Activated naive CD4-positive, alpha-beta T cell treated with anti-CD3 and anti-CD28 coated beads for 36 hours (primary cell): ENCODE measurements at regions of chr3 and their contacts with region 1.

Region 1: DNA sequence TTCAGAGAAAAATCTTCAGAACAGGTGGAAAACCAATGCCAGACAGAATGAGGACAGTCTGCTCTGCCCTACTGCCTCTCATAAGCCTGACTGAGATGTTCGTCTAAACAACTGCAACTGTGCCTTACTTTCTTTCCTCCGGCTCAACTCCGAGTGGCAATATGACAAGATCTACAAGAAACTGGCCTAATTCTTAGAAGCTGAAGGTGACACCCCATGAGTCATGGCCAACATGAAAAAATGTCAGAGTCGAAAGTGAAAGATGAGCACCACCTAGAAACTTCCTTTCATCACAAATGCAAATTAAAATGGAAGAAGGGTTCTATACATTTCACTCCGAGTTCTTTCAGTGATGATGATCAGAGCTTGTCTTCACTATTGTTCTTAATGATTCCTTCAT is 12.9 kb downstream of the PCYT1A start:
- DNase-seq: peak; percentile 86
- H3K4me3 Mint-ChIP-seq: peak overlapping the region; percentile 52
- H3K27ac Mint-ChIP-seq: peak overlapping the region; percentile 94
- H3K4me1 Mint-ChIP-seq: peaks cover 73% of the 10 kb centered on the region
- H3K27me3 Mint-ChIP-seq: no peaks in the 10 kb centered on the region

Region 2: DNA sequence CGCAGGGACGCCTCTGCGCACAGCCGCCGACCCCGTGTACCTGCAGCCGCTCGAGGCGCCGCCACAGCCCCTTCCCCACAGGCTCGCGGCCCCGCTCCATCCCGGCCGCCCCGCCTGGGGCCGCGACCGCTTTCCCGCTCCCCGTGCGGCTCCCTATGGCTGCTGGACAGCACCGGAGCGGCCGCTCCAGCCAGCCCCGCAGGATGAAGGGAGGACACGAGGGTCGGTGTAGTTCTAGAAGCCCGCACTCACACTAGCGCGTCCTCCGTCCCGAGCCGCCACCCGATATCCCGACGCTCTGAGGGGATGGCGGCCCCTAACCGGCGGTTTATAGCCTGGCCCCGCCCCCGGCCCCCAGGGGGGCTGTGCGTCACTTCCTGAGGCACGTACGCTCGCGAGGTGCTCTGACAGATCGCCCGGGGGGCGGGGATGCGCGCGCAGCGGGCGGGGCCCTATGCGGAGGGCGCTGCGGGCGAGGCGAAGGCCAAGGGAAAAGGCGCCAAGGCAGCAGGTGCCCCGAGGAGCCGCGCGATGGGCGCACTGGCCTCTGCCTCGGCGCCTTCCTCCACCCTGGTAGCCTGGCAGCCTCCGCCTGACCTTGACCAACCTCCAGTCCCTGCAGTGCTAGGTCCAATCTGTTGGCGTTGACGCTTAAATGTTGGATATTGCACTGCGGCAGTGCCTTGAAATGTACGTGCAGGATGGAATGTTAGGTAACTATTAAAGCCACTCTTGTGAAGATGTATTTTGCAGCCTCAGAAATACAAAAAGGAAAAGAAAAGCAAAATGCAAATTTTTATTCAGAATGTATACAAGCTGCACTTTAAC is 192.6 kb before region 1 on chr3 and contains the start of gene TFRC:
- CTCF ChIA-PET with region 1: no interaction called
- intact Hi-C with region 1: loop called (anchors 1 kb)
- DNase-seq: peak; percentile 96
- H3K4me3 Mint-ChIP-seq: peak within 1 kb of the TSS; percentile 97
- H3K27ac Mint-ChIP-seq: peak within 1 kb of the TSS; percentile 93
- H3K4me1 Mint-ChIP-seq: peaks cover 36% of the 10 kb centered on the region
- H3K27me3 Mint-ChIP-seq: no peaks in the 10 kb centered on the region
- total RNA-seq, gene TFRC: 436 to 442 TPM

Region 3: GRCh38 chr3:196186651-196187573 is 87.7 kb before region 1 on chr3:
- CTCF ChIA-PET with region 1: no interaction called
- intact Hi-C with region 1: no loop called
- DNase-seq: peak; percentile 46
- H3K4me3 Mint-ChIP-seq: peak overlapping the region; percentile 24
- H3K27ac Mint-ChIP-seq: no peak overlapping the region
- H3K4me1 Mint-ChIP-seq: peaks cover 42% of the 10 kb centered on the region
- H3K27me3 Mint-ChIP-seq: no peaks in the 10 kb centered on the region

Region 4: DNA sequence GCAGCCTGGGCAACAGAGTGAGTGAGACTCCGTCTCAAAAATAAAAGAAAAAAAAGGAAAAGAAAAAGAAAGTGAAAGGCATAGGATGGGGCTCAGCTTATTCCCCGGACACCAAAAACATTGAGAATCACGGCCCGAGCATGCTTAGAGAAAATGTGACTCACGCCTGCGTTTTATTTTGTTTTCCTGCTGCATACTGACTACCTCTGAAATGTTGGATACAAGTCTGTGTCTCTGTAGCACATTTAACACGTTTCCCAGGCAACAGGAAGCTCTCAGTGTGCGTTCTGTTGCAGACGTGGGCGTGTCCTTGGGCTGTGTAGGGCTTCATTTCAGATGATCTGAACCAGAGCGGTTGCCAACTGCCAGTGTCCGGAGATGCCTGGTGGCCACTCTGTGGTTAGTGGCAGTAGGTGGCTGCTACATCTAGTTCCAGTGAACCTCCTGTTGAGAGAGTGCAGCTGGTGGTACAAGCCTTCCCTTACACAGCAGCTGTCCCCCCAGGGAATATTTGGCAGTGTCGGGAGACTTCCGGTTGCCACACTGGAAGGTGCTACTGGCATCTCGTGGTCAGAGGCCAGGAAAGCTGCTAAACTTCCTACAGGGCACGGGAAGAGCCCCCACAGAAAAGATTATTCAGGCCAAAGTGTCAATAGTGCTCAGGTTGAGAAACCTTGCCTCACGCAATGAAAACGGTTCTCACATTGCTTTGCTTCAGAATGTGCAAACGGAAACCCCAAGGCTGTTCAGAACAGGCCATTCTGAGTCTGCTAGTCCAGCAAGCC is 55.2 kb before region 1 on chr3:
- CTCF ChIA-PET with region 1: interaction called, 3 read pairs
- intact Hi-C with region 1: loop called (anchors 1 kb)
- DNase-seq: peak; percentile 89
- H3K4me3 Mint-ChIP-seq: peak overlapping the region; percentile 66
- H3K27ac Mint-ChIP-seq: peak overlapping the region; percentile 84
- H3K4me1 Mint-ChIP-seq: peaks cover 26% of the 10 kb centered on the region
- H3K27me3 Mint-ChIP-seq: no peaks in the 10 kb centered on the region

Region 5: DNA sequence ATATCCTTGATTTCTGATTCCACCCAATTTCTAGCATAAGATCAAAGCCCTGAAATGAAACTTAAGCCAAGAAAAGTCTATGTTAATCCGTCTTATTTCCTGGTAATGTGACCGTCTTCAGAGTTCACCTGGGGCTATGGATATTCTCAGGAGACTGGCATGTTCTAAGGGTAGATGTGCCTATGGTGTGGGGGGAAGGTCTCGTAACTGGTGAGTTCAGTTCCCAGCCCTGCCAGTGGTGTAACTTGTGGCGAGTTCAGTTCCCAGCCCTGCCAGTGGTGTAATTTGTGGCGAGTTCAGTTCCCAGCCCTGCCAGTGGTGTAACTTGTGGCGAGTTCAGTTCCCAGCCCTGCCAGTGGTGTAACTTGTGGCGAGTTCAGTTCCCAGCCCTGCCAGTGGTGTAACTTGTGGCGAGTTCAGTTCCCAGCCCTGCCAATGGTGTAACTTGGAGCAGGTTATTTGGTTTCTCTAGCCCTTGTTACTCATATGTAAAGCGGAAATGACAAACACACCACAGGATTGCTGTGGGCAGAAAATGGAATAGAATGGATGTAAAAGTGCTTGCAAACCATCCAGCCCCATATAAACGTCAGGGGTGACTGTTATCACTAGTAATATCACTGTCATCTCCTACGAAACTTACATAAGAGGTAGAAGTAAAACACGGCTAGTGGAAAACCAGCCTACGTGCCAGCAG is 27.8 kb before region 1 on chr3:
- CTCF ChIA-PET with region 1: no interaction called
- intact Hi-C with region 1: no loop called
- DNase-seq: no peak
- H3K4me3 Mint-ChIP-seq: no peak overlapping the region
- H3K27ac Mint-ChIP-seq: no peak overlapping the region
- H3K4me1 Mint-ChIP-seq: no peaks in the 10 kb centered on the region
- H3K27me3 Mint-ChIP-seq: no peaks in the 10 kb centered on the region

Region 6: DNA sequence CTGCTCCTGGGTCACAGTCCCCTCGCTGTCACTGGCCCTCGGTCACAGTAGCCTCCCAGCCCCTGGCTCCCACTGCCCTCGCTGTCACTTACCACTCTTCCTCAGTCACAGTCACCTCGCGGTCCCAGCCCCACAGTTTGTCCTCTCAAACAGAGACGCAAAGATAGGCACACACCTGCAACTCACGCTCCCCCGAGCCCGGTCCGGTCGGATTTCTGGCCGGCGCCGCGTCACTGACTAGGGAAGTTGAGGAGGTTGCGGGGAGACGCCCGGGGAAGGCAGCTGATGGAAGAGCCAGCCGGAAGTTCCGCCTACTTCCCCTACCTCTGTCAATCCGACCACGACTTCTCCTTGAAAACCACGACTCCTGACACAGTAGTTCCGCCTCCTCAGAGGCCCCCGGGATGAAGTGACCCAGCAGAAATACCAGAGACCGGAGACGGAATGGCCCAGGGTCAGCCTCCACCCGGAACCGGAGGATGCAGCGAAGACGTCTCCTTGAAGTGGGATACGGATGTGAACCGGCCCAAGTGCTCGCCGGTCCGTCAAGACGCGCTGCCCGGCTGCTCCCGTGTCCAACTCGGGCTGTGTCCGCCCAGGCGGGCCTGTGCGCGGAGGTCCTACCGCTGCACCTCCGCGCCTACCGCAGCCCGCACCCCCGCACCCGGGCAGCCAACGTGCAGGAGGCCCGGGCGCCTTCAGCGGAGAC is 13.0 kb after region 1 on chr3 and contains the start of gene PCYT1A:
- CTCF ChIA-PET with region 1: interaction called, 7 read pairs
- intact Hi-C with region 1: loop called (anchors 1 kb)
- DNase-seq: peak; percentile 84
- H3K4me3 Mint-ChIP-seq: peak within 1 kb of the TSS; percentile 100
- H3K27ac Mint-ChIP-seq: peak within 1 kb of the TSS; percentile 99
- H3K4me1 Mint-ChIP-seq: peaks cover 37% of the 10 kb centered on the region
- H3K27me3 Mint-ChIP-seq: no peaks in the 10 kb centered on the region
- total RNA-seq, gene PCYT1A: 27.4 to 28.4 TPM

Region 7: GRCh38 chr3:196432137-196432879 is 157.7 kb after region 1 on chr3 and contains the start of gene UBXN7:
- CTCF ChIA-PET with region 1: no interaction called
- intact Hi-C with region 1: loop called (anchors 2 kb)
- DNase-seq: peak; percentile 97
- H3K4me3 Mint-ChIP-seq: peak within 1 kb of the TSS; percentile 69
- H3K27ac Mint-ChIP-seq: peak within 1 kb of the TSS; percentile 93
- H3K4me1 Mint-ChIP-seq: peaks cover 15% of the 10 kb centered on the region
- H3K27me3 Mint-ChIP-seq: no peaks in the 10 kb centered on the region
- total RNA-seq, gene UBXN7: 54.2 to 62.5 TPM

Region 8: DNA sequence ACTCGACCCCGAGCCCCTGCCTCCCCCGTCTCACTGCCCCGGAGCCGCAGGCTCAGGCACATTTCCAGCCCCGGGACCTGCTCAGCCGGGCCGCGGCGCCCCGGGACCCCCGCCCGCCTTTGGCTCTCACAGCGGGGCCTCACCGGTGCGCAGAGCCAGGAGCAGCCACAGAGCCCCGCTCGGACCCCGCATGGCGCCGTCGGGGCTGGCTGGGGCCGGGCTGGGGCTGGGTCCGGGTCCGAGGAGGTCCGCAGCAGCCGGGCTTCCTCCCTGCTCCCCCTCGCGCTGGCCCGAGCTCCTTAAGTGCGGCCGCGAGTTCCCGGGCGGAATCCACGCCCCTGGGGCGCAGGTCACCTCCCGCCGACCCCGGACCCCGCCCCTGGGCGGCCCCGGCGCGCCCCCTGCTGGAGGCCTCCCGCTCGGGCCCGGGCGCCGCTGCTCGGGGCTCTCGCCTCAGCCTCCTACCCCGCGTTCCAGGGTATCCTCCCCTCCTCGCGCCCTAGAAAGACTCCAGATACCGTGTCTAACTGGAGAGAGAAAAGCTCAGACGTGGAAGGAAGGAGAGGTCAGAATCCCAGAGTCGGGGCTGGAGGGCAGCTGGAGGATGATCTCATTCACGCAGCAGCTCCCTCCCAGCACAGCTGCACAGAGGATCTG is 755.1 kb after region 1 on chr3 and contains the start of gene MELTF:
- CTCF ChIA-PET with region 1: no interaction called
- intact Hi-C with region 1: no loop called
- DNase-seq: peak; percentile 65
- H3K4me3 Mint-ChIP-seq: peak within 1 kb of the TSS; percentile 78
- H3K27ac Mint-ChIP-seq: no peak within 1 kb of the TSS
- H3K4me1 Mint-ChIP-seq: peaks cover 9% of the 10 kb centered on the region
- H3K27me3 Mint-ChIP-seq: peaks cover 6% of the 10 kb centered on the region
- total RNA-seq, gene MELTF: 5.1 to 5.5 TPM